ENCODE measurements at regions of chr1 and their contacts with region 1.

Region 1: DNA sequence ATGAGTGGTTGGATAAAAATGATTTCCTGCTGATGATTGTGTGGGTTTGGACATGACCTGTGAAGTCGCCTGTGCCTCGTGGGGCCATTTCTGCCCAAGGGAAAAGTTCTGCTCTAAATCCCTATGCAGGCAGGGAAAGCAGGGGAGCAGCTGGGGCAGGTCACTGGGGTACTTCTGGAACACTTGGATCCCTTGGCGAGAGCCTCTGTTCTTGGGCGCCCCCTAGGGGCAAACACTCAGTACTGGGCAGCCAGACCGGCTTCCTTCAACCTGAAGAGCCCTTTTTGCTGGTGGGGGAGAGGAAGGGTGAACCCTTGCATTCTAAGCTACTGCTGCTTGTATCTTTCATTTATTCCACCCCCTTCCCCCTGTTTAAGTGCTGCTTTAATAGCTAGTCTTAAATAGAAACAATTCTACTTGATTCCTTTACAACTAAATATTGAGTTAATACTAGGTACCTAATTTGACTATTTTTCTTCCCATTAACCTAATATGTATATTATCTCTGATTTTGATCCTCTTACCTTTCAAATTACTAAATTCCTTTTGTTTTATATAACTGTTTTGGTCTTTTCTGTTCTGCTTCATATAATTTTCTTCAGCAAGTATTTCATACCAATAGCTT is 5.1 kb upstream of the CLEC20A start:
- DNase-seq: peak; percentile 80
- ATAC-seq: peak; percentile 88

Region 2: GRCh38 chr1:178075333-178075732 is 426.5 kb before region 1 on chr1:
- intact Hi-C with region 1: no loop called
- DNase-seq: no peak
- ATAC-seq: no peak

Region 3: DNA sequence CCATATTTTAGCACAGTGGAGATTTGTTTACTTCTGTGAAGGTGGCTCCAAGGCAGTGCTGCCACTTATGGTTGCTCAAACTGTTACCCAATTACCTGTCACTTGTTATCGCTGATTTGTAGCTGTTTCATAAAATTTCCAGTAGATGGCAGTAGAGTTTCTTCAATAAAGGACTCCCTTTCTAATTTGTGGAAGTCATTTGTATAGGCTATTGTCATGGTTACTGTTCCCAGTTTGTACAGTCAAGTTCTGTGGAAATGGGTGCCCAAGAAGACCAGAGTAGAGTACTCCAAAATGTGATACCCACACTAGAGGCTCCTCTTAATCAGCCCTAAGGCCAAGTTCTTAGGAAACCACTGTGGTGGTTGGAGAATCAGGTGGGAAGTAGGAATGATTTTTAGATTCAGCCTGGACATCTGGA is 191.1 kb before region 1 on chr1:
- intact Hi-C with region 1: loop called (anchors 2 kb)
- DNase-seq: no peak
- ATAC-seq: peak; percentile 91

Region 4: DNA sequence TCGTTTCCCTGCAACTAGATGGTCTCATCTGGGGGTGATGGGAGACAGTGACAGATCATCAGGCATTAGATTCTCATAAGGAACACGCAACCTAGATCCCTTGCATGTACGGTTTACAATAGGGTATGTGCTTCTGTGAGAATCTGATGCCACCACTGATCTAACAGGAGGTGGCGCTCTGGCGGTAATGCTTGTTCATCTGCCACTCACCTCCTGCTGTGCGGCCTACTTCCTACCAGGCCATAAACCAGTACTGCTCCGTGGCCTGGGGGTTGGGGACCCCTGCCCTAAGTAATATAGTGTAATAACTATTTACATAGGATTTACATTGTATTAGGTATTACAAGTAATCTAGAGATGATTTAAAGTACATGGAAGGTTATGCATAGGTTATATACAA is 140.0 kb before region 1 on chr1:
- intact Hi-C with region 1: no loop called
- DNase-seq: no peak
- ATAC-seq: no peak